ENCODE measurements at regions of chr17 and their contacts with region 1.

Region 1: DNA sequence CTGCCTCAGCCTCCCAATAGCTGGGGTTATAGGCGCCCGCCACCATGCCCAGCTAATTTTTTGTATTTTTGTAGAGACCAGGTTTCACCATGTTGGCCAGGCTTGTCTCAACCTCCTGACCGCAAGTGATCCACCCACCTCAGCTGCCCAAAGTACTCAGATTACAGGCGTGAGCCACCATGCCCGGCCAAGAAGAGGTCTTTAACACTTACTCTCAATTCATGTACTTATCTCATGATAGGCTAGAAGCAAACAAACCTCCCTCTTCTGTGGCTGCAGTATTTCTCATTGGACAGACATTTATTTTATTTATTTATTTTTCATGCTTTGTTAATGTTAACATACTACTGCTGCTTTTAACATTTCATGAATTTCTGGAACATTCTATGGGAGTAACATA is 7.0 kb upstream of the NT5C start:
- DNase-seq: peak; percentile 37
- ATAC-seq: peak; percentile 78
- H3K4me3 ChIP-seq: no peak overlapping the region
- H3K27ac ChIP-seq: no peak overlapping the region
- H3K4me1 ChIP-seq: 0 out of 2 replicates have a peak, but pooled peaks cover 3% of the 10 kb centered on the region
- H3K27me3 ChIP-seq: no peaks in the 10 kb centered on the region
- CTCF ChIP-seq: no peak
- POLR2A ChIP-seq: no peak
- RAD21 ChIP-seq: no peak

Region 2: DNA sequence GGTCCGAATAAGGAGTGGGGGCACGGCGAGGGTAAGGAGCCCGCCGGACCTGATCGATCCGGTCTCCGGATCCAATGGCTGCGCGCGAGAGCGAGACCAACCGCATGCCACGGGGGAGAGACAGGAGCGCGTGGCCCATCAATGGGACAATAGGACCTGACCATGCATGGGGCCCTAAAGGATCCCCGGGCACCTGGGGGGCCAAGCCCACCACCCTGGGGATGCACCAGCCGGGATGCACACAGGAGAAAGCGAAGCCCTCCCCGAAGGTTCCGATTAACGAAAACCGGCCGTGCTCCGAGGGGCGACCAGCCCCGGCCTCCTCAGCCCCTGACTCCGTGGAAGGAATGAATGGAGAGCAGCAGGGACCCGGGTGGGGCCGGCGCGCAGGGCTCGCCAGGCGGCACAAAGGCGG is 15.3 kb after region 1 on chr17:
- CTCF ChIA-PET with region 1: no interaction called
- POLR2A ChIA-PET with region 1: no interaction called
- dilution Hi-C with region 1: no loop called
- in situ Hi-C with region 1: no loop called
- intact Hi-C with region 1: loop called (anchors 2 kb)
- DNase-seq: no peak
- ATAC-seq: peak; percentile 5
- H3K4me3 ChIP-seq: peak overlapping the region; percentile 75
- H3K27ac ChIP-seq: peak overlapping the region; percentile 74
- H3K4me1 ChIP-seq: no peaks in the 10 kb centered on the region
- H3K27me3 ChIP-seq: no peaks in the 10 kb centered on the region
- CTCF ChIP-seq: no peak
- POLR2A ChIP-seq: no peak
- RAD21 ChIP-seq: no peak

Region 3: DNA sequence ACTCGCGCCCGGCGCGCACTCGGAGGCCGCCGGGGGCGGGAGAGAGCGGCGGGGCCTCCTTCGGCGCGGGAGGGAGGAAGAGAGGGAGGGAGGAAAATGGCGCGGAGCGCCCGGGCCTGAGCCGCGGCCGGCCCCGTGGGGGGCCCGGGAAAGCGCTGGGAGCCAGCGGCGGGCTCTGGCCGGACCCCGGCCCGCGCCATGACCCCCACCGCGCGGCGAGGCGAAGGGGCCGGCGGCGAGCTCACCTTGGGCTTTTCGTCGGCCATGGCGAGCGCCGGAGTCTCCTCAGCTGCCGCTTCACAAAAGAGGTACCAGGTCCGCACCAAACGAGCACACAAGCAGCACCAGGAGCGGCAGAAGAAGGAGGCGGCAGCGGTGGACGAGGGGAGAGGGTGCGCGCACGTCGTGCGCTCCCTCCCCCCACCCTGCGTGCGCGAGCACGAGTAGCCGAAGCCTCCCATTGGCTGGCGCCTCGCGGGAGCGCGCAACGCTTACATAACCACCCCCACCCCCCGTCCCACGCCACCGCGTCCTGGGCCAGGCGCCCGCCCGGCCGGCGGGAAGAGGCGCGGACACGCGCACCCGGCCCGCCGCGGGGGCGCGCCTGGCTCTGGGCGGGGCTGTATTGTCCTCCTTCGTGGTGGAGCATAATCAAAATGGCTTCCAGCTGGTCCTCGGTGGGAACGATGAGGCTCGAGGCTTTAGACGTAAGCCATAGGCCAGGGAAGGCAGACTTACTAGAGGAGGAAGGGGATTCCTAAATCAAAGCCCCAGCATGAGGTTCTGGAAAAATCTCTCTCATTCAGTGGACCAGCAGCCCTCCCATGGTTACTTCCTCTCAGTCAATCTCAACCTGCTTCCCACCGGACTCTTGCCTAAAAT is 44.3 kb after region 1 on chr17 and contains the start of gene SUMO2:
- CTCF ChIA-PET with region 1: no interaction called
- POLR2A ChIA-PET with region 1: no interaction called
- dilution Hi-C with region 1: no loop called
- in situ Hi-C with region 1: no loop called
- intact Hi-C with region 1: no loop called
- DNase-seq: peak; percentile 94
- ATAC-seq: peak; percentile 90
- H3K4me3 ChIP-seq: peak within 1 kb of the TSS; percentile 98
- H3K27ac ChIP-seq: peak within 1 kb of the TSS; percentile 87
- H3K4me1 ChIP-seq: no peaks in the 10 kb centered on the region
- H3K27me3 ChIP-seq: no peaks in the 10 kb centered on the region
- CTCF ChIP-seq: peak; percentile 33; the same call in 1 of the 2 replicates
- POLR2A ChIP-seq: peak; percentile 58; the same call in 1 of the 2 replicates
- RAD21 ChIP-seq: no peak
- total RNA-seq, gene SUMO2: 71.3 and 133 TPM in 2 replicates

Region 4: DNA sequence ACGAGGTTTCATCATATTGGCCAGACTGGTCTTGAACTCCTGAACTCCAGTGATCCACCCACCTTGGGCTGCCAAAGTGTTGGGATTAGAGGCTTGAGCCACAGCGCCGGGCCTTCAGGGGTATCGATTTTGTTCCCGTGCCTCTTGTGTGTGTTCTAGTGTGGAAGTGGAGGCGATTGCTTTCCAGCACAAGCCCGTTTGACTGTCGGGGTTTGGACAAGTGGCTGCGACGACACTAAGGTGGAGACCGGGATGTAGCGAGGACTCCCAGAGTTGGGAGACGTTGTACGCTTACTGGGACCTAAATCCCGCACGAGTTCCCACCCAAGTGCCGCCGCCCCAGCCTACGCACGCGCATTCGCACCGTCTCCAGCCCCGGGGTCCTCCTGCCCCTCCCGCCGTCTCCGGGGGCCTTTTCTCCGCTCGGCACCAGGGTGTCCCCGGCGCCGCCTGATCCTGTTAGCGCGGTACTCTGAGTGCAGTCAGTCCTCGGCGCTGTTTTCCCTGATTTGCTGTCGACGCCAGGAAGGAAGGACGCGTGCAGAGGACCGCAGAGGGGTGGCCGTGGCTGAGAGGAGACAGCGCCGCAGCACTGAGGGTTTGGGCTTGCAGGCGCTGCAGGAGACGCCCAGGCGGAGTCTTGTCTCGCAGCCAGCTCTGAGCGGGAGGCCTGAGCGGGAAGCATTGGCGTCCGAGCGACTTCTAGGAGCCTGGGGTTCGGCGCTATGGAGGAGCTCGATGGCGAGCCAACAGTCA is 66.7 kb after region 1 on chr17 and contains the start of gene NUP85:
- CTCF ChIA-PET with region 1: no interaction called
- POLR2A ChIA-PET with region 1: no interaction called
- dilution Hi-C with region 1: no loop called
- in situ Hi-C with region 1: no loop called
- intact Hi-C with region 1: no loop called
- DNase-seq: peak; percentile 89
- ATAC-seq: peak; percentile 98
- H3K4me3 ChIP-seq: peak within 1 kb of the TSS; percentile 91
- H3K27ac ChIP-seq: peak within 1 kb of the TSS; percentile 98
- H3K4me1 ChIP-seq: no peaks in the 10 kb centered on the region; the same call in 1 of the 2 replicates
- H3K27me3 ChIP-seq: no peaks in the 10 kb centered on the region
- CTCF ChIP-seq: no peak
- POLR2A ChIP-seq: peak; percentile 77
- RAD21 ChIP-seq: no peak
- total RNA-seq, gene NUP85: 26.7 and 29.4 TPM in 2 replicates